IMR-90 (cell line): ENCODE measurements at regions of chr16 and their contacts with region 1.

Region 1: DNA sequence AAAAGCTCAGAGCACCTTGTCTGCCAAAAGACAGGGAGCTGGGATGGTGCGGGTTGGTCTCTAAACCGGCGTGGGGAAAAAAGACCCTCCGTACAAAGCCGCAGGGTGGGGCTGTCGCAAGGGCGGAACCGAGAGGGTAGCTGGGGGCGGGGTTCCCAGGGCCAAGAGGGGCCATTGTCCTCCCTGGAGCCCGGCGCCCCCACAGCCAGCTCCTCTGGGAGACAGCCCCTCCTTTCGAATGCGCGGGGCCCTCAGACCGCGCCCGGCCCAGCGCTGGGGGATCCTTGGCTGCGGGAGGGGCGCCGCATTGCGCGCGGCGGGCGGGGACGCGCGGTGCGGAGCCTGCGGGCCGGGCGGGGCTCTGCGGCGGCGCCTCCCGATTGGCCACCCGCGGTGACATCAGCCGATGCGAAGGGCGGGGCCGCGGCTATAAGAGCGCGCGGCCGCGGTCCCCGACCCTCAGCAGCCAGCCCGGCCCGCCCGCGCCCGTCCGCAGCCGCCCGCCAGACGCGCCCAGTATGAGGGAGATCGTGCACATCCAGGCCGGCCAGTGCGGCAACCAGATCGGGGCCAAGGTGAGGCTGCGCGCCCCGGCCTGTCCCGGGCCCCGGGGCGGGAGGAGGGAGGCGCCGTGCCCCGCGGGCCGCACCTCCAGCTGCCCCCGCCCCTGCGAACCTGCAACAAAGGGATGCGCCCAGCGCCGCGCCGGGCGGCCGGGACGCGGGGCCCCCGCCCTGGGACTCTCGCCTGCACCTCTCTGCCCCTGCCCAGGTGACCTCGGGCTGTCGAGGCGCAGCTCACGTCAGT is at the start of gene TUBB3:
- DNase-seq: peak; percentile 77
- ATAC-seq: peak; percentile 40
- H3K4me3 ChIP-seq: peak within 1 kb of the TSS; percentile 83
- H3K27ac ChIP-seq: peak within 1 kb of the TSS; percentile 98
- H3K4me1 ChIP-seq: peaks cover 21% of the 10 kb centered on the region
- H3K27me3 ChIP-seq: no peaks in the 10 kb centered on the region
- CTCF ChIP-seq: no peak
- POLR2A ChIP-seq: peak; percentile 99
- RAD21 ChIP-seq: no peak
- total RNA-seq, gene TUBB3: 311 and 337 TPM in 2 replicates

Region 2: DNA sequence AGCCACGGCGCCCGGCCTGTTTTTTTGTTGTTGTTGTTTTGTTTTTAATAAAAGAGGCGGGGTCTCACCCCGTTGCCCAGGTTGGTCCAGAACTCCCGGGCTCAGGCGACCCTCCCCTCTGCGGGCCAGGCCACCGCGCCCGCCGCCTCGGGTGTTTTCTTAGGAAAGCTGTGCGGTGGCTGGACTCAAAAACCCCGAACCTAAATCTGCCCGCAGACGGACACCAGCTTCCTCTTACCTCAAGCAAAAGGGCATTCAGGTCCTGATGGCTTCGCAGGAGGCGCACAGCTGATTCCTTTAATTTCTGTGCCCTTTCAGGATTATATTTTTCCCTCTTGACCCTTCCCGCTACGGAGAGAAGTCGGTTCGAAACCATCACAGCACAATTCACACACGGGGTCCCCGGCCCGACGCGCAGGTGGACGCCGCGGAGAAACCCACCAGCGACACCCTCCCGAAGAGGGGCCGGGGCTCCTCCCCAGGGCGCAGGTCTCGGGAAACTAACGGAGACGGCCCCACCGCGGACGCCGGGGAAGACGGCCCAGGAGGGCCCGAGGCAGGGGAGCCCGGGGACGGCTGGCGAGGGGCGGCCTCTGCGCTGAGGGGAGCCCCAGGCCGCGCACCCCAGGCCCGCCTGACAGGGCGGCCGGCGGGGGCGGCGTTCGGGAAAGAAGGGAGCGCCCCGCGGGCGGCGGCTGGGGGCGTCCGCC is 107.3 kb before region 1 on chr16:
- CTCF ChIA-PET with region 1: no interaction called
- POLR2A ChIA-PET with region 1: no interaction called
- dilution Hi-C with region 1: no loop called
- in situ Hi-C with region 1: no loop called
- intact Hi-C with region 1: no loop called
- DNase-seq: no peak
- ATAC-seq: peak; percentile 24
- H3K4me3 ChIP-seq: peak overlapping the region; percentile 88
- H3K27ac ChIP-seq: peak overlapping the region; percentile 3; the same call in 1 of the 2 replicates
- H3K4me1 ChIP-seq: peaks cover 4% of the 10 kb centered on the region
- H3K27me3 ChIP-seq: no peaks in the 10 kb centered on the region
- CTCF ChIP-seq: no peak
- POLR2A ChIP-seq: no peak
- RAD21 ChIP-seq: no peak

Region 3: DNA sequence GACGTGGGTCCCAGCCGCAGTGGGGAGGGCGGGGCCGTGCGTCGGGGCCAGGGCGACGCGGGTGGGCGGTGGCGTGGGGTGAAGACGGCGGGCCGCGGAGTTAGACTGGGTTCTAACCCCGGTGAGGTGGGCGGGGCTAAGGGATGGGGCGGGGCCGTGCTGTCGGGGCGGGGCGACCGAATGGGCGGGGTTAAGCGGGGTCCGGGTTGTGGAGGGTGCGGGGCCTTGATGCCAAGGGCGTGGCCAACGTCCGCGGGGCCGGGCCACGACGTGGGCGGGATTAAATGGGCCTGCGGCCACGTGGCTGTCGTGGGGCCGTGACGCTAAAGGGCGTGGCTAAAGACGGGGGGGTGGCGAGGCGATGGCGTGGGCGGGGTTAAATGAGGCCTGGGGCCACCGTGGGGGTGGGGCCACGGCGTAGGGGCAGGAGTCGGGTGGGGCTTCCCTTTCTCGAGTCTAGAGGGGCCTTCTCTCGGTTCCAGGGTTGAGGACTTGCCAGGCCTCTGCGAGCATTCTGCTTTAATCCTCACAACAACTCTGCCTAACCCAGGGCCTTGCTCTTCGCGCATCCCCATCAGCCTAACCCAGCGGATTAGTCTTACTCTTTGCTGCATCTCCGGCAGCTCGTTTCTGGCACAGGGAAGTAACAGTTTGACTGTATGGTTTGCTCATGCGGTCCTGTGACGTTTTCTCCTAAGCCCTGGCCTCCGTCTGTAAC is 49.0 kb before region 1 on chr16:
- CTCF ChIA-PET with region 1: no interaction called
- POLR2A ChIA-PET with region 1: no interaction called
- dilution Hi-C with region 1: no loop called
- in situ Hi-C with region 1: no loop called
- intact Hi-C with region 1: no loop called
- DNase-seq: peak; percentile 95
- ATAC-seq: peak; percentile 91
- H3K4me3 ChIP-seq: peak overlapping the region; percentile 96
- H3K27ac ChIP-seq: peak overlapping the region; percentile 98
- H3K4me1 ChIP-seq: peaks cover 9% of the 10 kb centered on the region
- H3K27me3 ChIP-seq: no peaks in the 10 kb centered on the region
- CTCF ChIP-seq: no peak
- POLR2A ChIP-seq: no peak
- RAD21 ChIP-seq: no peak

Region 4: GRCh38 chr16:89949121-89949742 is 26.1 kb after region 1 on chr16:
- CTCF ChIA-PET with region 1: interaction called, 3 read pairs
- POLR2A ChIA-PET with region 1: interaction called, 3 read pairs
- dilution Hi-C with region 1: no loop called
- in situ Hi-C with region 1: no loop called
- intact Hi-C with region 1: loop called (anchors 2 kb)
- DNase-seq: no peak
- ATAC-seq: no peak
- H3K4me3 ChIP-seq: peak overlapping the region; percentile 92
- H3K27ac ChIP-seq: no peak overlapping the region
- H3K4me1 ChIP-seq: peaks cover 6% of the 10 kb centered on the region; the same call in 1 of the 2 replicates
- H3K27me3 ChIP-seq: no peaks in the 10 kb centered on the region
- CTCF ChIP-seq: no peak
- POLR2A ChIP-seq: no peak
- RAD21 ChIP-seq: no peak

Region 5: GRCh38 chr16:89972244-89973234 is 49.5 kb after region 1 on chr16:
- CTCF ChIA-PET with region 1: interaction called, 4 read pairs
- POLR2A ChIA-PET with region 1: interaction called, 12 read pairs
- dilution Hi-C with region 1: no loop called
- in situ Hi-C with region 1: no loop called
- intact Hi-C with region 1: no loop called
- DNase-seq: peak; percentile 85
- ATAC-seq: peak; percentile 96
- H3K4me3 ChIP-seq: peak overlapping the region; percentile 69
- H3K27ac ChIP-seq: peak overlapping the region; percentile 86
- H3K4me1 ChIP-seq: peaks cover 9% of the 10 kb centered on the region
- H3K27me3 ChIP-seq: no peaks in the 10 kb centered on the region
- CTCF ChIP-seq: no peak
- POLR2A ChIP-seq: peak; percentile 89
- RAD21 ChIP-seq: no peak

Region 6: DNA sequence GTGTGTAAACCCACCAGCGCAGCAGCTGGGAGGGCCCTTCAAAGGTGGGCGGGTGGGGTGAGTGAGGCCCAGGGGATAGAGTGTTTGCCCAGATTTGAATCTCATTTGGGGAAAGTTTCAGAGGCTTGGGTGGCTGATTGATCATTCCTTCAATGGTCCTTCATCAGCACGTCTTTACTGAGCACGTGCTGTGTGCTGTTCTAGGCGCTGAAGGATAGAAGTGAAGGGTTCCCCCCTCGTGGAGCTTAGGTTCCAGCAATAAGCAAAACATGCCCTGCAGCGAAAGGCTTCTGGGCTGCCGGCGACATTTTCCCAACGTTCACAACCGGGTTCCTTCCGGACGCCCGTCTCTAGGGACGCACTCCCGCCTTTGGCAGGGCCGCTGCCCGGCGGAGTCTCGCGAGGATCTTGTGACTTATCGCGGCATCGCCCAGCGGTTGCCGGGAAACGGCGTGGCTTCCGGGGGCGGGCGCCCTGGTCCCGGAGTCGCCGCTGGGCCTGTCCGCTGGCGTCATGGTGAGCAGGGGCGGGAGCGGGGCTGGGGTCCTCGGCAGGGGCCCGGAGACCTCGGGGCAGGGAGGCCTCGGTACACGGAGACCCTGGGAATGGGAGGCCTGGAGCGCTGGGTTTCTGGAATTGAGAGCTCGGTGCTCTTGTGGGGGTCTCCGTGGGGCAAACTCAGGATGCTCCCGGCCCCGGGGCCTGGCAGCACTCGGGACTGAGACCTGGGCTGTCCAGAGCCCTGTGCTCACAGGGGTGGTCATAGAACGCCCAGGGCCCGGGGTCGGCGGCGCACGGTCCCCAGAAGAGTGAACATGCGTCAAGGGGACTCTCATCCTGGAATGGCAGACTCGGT is 99.3 kb after region 1 on chr16:
- CTCF ChIA-PET with region 1: no interaction called
- POLR2A ChIA-PET with region 1: no interaction called
- dilution Hi-C with region 1: no loop called
- in situ Hi-C with region 1: no loop called
- intact Hi-C with region 1: loop called (anchors 10 kb)
- DNase-seq: peak; percentile 82
- ATAC-seq: peak; percentile 76
- H3K4me3 ChIP-seq: peak overlapping the region; percentile 53
- H3K27ac ChIP-seq: peak overlapping the region; percentile 78
- H3K4me1 ChIP-seq: peaks cover 10% of the 10 kb centered on the region
- H3K27me3 ChIP-seq: no peaks in the 10 kb centered on the region
- CTCF ChIP-seq: no peak
- POLR2A ChIP-seq: no peak
- RAD21 ChIP-seq: no peak